GM12878 (cell line): ENCODE measurements at regions of chr10 and their contacts with region 1.

Region 1: DNA sequence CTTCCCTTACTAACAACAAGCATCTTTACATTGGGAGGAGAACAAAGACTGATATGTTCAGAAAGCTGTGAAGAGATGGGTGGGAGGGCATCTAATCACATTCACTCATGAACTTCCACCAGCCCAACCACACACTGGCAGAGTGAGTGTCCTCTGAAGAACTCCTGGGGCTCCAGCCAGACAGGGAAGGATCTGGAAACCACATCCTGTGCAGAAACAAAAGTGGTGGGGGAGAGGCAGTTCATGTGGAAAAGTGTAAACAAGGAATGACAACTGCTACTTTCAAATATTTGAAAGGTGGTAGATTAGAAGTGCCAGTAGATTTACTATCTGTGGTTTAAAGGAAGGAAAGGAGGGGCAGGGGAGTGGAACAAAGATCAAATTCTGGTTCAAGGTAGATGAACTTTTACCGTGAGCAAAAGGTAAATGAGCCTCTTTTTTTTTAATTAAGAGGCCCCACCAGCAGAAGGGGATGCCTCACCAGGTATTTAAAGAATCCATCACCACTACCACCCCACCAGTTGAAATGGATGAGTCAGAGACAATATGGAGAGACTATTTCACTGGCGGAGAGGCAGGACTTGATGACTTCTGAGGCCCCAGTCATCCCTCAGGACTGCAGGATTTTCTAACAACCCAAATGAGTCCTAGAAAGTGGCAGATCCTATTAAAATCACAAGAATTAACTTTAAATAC is 34.5 kb downstream of the GOT1 start:
- DNase-seq: no peak
- ATAC-seq: no peak
- H3K4me3 ChIP-seq: no peak overlapping the region
- H3K27ac ChIP-seq: no peak overlapping the region
- H3K4me1 ChIP-seq: no peaks in the 10 kb centered on the region
- H3K27me3 ChIP-seq: no peaks in the 10 kb centered on the region
- CTCF ChIP-seq: no peak
- EP300 ChIP-seq: no peak
- POLR2A ChIP-seq: no peak
- RAD21 ChIP-seq: no peak

Region 2: GRCh38 chr10:99328579-99329523 is 67.0 kb before region 1 on chr10 and contains the start of gene CNNM1:
- CTCF ChIA-PET with region 1: no interaction called
- POLR2A ChIA-PET with region 1: no interaction called
- RAD21 ChIA-PET with region 1: no interaction called
- SMC1A ChIA-PET with region 1: no interaction called
- in situ Hi-C with region 1: no loop called
- intact Hi-C with region 1: no loop called
- DNase-seq: no peak
- ATAC-seq: no peak
- H3K4me3 ChIP-seq: no peak within 1 kb of the TSS
- H3K27ac ChIP-seq: no peak within 1 kb of the TSS
- H3K4me1 ChIP-seq: no peaks in the 10 kb centered on the region
- H3K27me3 ChIP-seq: peaks cover 3 to 11% of the 10 kb centered on the region in 2 experiments
- CTCF ChIP-seq: no peak
- EP300 ChIP-seq: no peak
- POLR2A ChIP-seq: no peak; the same call in 1 of the 2 replicates
- RAD21 ChIP-seq: no peak
- polyA plus RNA-seq, gene CNNM1: not detected

Region 3: DNA sequence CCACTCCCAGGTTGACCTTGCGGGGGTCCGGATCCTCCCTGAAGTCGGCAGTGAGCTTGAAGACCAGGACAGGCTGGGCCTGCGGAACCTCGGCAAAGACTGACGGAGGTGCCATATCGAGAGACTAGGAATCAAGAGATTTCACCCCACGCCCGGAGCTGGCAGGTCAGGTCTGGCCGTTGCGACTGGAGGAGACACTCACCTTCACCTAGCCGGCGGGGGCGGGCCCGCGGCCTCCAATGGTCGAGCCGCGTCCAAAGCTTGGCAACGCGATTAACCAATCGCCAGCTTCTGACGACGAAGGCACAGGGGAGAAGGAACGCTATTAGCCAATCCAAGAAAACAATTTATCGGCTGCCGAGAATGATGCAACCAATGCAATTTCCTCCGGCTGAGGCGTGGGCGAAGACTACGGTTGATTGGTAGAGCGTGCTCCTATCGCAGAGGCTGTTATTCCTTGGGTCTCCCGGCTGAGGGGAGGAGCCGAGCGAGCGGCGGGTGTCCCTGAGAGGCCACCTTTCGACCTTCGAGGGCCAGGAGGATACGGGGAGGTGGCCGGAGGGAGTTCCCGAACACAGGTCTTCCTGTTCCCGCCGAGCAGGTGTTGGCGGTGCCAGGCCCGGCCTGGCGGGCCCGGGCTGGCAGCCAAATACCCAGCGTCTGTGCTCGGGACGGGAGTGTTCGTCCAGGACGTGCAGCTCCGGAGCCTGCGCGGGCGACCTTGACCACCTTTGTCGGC is 34.7 kb after region 1 on chr10 and contains the start of gene GOT1:
- CTCF ChIA-PET with region 1: interaction called, 25 read pairs
- POLR2A ChIA-PET with region 1: no interaction called
- RAD21 ChIA-PET with region 1: interaction called, 8 read pairs
- SMC1A ChIA-PET with region 1: interaction called, 11 read pairs
- in situ Hi-C with region 1: no loop called
- intact Hi-C with region 1: loop called (anchors 2 kb)
- DNase-seq: peak; percentile 99
- ATAC-seq: peak; percentile 97
- H3K4me3 ChIP-seq: peak within 1 kb of the TSS; percentile 97
- H3K27ac ChIP-seq: peak within 1 kb of the TSS; percentile 71
- H3K4me1 ChIP-seq: peaks cover 4% of the 10 kb centered on the region; the same call in 1 of the 2 replicates
- H3K27me3 ChIP-seq: no peaks in the 10 kb centered on the region
- CTCF ChIP-seq: no peak
- EP300 ChIP-seq: no peak
- POLR2A ChIP-seq: peak; percentile 94
- RAD21 ChIP-seq: no peak
- polyA plus RNA-seq, gene GOT1: 56.2 to 58.4 TPM

Region 4: DNA sequence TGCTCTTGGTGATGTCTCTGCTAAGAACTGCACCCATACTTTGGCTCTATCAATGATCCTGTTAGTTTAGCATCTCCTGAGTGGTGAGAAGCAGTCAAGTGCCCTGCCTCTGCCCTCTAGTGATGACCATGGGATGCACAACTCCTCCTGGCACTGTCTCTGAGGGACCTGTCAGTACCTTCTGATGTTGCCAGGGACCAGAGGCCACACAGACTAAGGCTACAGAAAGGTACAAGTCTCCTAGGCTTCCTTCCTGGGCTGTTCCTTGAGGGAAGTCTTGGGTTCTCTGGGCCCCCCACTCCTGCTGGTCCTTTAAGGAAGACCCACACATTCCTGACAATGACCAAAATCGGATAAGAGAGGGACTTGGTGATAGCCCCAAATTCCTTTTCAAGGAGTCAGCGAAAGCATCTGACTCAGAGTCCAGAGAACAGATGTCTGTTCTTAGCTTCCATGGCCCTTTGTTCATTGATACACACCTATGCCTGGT is 152.2 kb after region 1 on chr10:
- CTCF ChIA-PET with region 1: no interaction called
- POLR2A ChIA-PET with region 1: no interaction called
- RAD21 ChIA-PET with region 1: no interaction called
- SMC1A ChIA-PET with region 1: no interaction called
- in situ Hi-C with region 1: no loop called
- intact Hi-C with region 1: loop called (anchors 5 kb)
- DNase-seq: no peak
- ATAC-seq: peak; percentile 89
- H3K4me3 ChIP-seq: no peak overlapping the region
- H3K27ac ChIP-seq: no peak overlapping the region
- H3K4me1 ChIP-seq: no peaks in the 10 kb centered on the region
- H3K27me3 ChIP-seq: peaks cover 2 to 5% of the 10 kb centered on the region in 2 experiments; a peak in 3 of 4 replicates
- CTCF ChIP-seq: peak; percentile 40 to 53 (median 41); a peak in 5 of 6 replicates
- EP300 ChIP-seq: no peak
- POLR2A ChIP-seq: no peak
- RAD21 ChIP-seq: 0 out of 2 replicates have a peak, but pooled peaks have one; percentile 30

Region 5: GRCh38 chr10:99560277-99561126 is 164.6 kb after region 1 on chr10:
- CTCF ChIA-PET with region 1: interaction called, 3 read pairs
- POLR2A ChIA-PET with region 1: no interaction called
- RAD21 ChIA-PET with region 1: no interaction called
- SMC1A ChIA-PET with region 1: no interaction called
- in situ Hi-C with region 1: no loop called
- intact Hi-C with region 1: loop called (anchors 2 kb)
- DNase-seq: no peak
- ATAC-seq: no peak
- H3K4me3 ChIP-seq: no peak overlapping the region
- H3K27ac ChIP-seq: no peak overlapping the region
- H3K4me1 ChIP-seq: peaks cover 13% of the 10 kb centered on the region
- H3K27me3 ChIP-seq: no peaks in the 10 kb centered on the region; a peak in 1 of 4 replicates
- CTCF ChIP-seq: peak; percentile 65 to 74 (median 67)
- EP300 ChIP-seq: no peak
- POLR2A ChIP-seq: no peak
- RAD21 ChIP-seq: peak; percentile 69